ENCODE measurements at regions of chr1 and their contacts with region 1.

Region 1: DNA sequence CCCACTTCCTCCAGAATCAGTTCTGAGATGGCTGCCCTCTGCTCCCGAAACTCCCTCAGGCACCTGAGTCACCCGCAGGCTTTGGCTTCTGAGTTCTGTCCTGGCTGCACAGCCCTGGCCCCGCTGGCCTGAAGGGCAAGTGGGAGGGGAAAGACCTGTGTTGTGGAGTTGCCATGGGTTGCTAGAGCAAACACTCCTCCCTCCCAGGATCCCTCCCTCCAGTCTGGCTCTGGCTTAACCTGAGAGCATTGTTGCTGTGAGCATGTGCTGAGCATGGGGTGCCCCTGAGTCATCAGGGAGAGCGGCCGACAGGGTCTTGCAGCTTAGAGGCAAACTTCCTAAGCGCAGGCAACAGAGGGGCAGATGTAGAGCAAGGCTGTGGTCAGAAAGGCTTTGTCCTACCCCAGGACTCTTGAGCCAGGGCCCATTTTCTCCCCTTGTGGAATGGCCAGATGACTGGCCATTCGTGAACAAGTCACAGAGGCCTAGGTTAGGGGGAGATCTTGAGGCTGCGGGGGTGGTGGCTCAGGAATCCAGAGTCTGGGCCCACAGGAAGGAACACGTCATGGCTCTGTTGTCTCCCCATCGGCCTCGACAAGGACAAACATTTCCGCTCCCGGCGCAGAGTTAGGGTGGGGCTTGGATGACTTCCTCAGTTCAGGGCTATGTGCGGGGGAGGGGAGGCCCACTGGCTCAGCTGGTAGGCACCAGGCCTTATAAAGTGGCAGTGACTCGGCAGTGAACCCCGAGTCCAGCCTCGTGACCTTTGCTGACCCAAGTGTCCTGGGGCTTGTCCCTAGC is at the start of gene DYNLT4:
- DNase-seq: peak; percentile 97
- ATAC-seq: peak; percentile 56
- H3K4me3 Mint-ChIP-seq: peak within 1 kb of the TSS; percentile 64
- H3K27ac Mint-ChIP-seq: peak within 1 kb of the TSS; percentile 99
- H3K4me1 Mint-ChIP-seq: peaks cover 69% of the 10 kb centered on the region
- H3K27me3 Mint-ChIP-seq: no peaks in the 10 kb centered on the region
- total RNA-seq, gene DYNLT4: 0.40 to 1.3 TPM

Region 2: GRCh38 chr1:44792783-44793714 is 14.4 kb before region 1 on chr1:
- CTCF ChIA-PET with region 1: interaction called, 60 read pairs
- DNase-seq: no peak
- ATAC-seq: no peak
- H3K4me3 Mint-ChIP-seq: no peak overlapping the region
- H3K27ac Mint-ChIP-seq: no peak overlapping the region
- H3K4me1 Mint-ChIP-seq: peaks cover 7% of the 10 kb centered on the region
- H3K27me3 Mint-ChIP-seq: no peaks in the 10 kb centered on the region